ENCODE measurements at regions of chr12 and their contacts with region 1.

Region 1: GRCh38 chr12:131608740-131609690 is 101.9 kb upstream of the SFSWAP start:
- DNase-seq: peak; percentile 78
- ATAC-seq: peak; percentile 91

Region 2: GRCh38 chr12:131379738-131380137 is 229.3 kb before region 1 on chr12:
- intact Hi-C with region 1: no loop called
- DNase-seq: no peak
- ATAC-seq: no peak

Region 3: GRCh38 chr12:131547555-131547954 is 61.5 kb before region 1 on chr12:
- intact Hi-C with region 1: no loop called
- DNase-seq: no peak
- ATAC-seq: no peak

Region 4: DNA sequence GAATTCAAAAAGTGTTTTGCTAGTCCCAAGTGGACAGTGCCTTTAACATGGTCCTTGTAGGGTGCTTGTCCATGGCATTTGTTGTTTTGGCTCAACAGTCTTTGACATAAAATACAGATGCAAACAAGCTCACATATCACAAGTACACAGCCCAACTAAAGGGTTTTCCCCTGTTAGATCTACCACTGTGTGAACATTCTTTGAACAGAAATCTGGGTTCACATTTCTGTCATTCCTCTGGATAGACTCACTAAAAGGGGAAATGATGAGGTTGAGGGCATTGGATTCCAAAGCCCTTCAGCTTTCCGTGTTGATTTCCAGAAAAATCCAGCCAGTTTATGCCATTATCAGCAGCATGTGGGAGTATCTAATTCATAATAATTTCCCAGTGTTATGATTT is 394.8 kb after region 1 on chr12:
- intact Hi-C with region 1: loop called in 1 of 2 experiments (anchors 5 kb)
- DNase-seq: no peak
- ATAC-seq: no peak